ENCODE measurements at regions of chr14 and their contacts with region 1.

Region 1: DNA sequence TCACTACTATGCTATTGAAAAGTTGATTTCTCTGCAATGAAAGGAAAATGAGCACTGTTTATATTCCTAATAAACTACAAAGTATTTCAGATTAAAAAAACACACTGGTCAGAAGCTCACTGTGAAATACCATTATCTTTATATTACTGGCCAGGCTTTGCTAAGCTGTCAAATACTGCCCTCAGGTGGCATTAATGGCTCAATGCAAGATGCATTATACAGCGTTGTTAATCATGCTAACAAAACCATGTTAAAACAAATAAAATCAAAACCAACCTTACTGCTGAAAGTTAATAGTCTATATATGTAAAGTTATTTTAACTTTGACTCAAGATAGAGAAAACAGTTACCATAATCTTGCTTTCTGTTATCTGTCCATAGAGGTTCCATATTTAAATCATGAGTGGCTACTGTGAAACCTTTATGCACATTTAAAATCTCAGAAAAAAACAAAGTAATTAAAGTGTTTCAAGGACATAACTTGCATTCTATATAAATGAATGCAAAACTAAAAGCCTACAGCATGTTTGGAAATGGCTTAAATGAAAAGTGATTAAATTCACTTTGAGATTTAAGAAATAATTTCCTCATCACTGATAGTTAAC is 121.7 kb downstream of the RALGAPA1 start:
- DNase-seq: peak; percentile 40
- H3K4me3 ChIP-seq: no peak overlapping the region
- H3K27ac ChIP-seq: no peak overlapping the region
- H3K4me1 ChIP-seq: no peaks in the 10 kb centered on the region
- H3K27me3 ChIP-seq: no peaks in the 10 kb centered on the region
- CTCF ChIP-seq: peak in 3 of 4 experiments; percentile 39 to 76 (median 68)
- POLR2A ChIP-seq: no peak

Region 2: GRCh38 chr14:35730871-35731270 is 43.4 kb after region 1 on chr14:
- intact Hi-C with region 1: no loop called
- DNase-seq: no peak
- H3K4me3 ChIP-seq: no peak overlapping the region
- H3K27ac ChIP-seq: no peak overlapping the region
- H3K4me1 ChIP-seq: no peaks in the 10 kb centered on the region
- H3K27me3 ChIP-seq: no peaks in the 10 kb centered on the region
- CTCF ChIP-seq: no peak
- POLR2A ChIP-seq: no peak

Region 3: DNA sequence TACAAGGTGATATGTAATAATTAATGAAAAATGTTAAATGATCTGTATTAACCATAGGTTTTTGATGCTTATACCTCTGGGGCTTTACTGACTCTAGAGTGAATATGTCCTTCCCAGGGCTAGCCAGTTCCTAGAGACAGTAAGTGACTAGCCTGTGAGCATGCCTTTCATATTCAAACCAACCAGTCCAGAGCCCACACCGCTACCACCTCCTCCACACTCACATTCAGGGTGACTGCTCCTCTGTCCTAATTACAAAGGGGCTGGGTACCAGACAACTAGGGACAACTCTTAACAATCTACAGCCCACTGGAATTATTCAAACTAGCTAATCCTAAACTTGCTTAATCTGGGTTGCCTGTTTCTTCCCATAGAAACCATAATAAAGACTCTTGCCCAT is 72.7 kb after region 1 on chr14:
- intact Hi-C with region 1: no loop called
- DNase-seq: no peak
- H3K4me3 ChIP-seq: no peak overlapping the region
- H3K27ac ChIP-seq: no peak overlapping the region
- H3K4me1 ChIP-seq: no peaks in the 10 kb centered on the region
- H3K27me3 ChIP-seq: no peaks in the 10 kb centered on the region
- CTCF ChIP-seq: no peak
- POLR2A ChIP-seq: no peak

Region 4: GRCh38 chr14:35808076-35808652 is 120.7 kb after region 1 on chr14:
- intact Hi-C with region 1: loop called (anchors 10 kb)
- DNase-seq: peak; percentile 68
- H3K4me3 ChIP-seq: peak overlapping the region; percentile 61 to 69
- H3K27ac ChIP-seq: peak overlapping the region; percentile 94 to 96
- H3K4me1 ChIP-seq: peaks cover 2% of the 10 kb centered on the region
- H3K27me3 ChIP-seq: no peaks in the 10 kb centered on the region
- CTCF ChIP-seq: no peak
- POLR2A ChIP-seq: peak; percentile 9